Mammary epithelial cell (primary cell): ENCODE measurements at regions of chr2 and their contacts with region 1.

Region 1: GRCh38 chr2:17470855-17471641 is 47.2 kb downstream of the RAD51AP2 start:
- DNase-seq: peak; percentile 66
- H3K4me3 ChIP-seq: peak overlapping the region in 1 of 3 experiments; percentile 0
- H3K27ac ChIP-seq: peak overlapping the region; percentile 53
- H3K4me1 ChIP-seq: peaks cover 22% of the 10 kb centered on the region
- H3K27me3 ChIP-seq: no peaks in the 10 kb centered on the region
- CTCF ChIP-seq: peak; percentile 68 to 74

Region 2: DNA sequence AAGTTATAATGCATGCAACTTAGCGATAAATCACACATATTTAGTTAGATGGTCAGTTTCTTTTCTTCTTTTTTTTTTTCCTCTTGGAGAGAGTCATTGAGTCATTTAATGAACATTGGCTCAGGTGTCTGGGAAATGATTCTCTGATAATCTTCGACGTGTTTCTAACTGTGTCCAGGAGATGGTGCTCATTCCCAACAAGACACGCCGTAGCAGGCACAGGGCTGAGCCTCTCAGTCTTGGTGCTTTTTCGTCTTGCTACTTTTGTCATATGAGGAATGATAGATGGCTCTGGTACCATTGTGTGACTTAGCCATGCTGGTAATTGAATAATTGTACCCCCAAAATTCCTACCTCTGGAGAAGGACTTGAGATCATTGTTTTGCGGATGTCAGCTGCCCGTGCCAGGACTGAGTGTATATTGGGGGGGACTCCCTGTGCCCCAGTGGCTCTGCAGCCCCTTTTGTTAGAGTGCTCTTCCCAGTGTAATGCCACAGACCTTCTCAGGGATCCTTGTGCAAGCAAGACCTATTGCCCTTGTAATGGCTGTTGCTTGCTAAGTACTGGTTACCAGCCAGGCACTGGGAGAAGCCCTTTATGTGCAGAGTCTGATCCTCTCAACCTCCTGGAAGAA is 697.9 kb before region 1 on chr2:
- CTCF ChIA-PET with region 1: no interaction called
- dilution Hi-C with region 1: no loop called
- in situ Hi-C with region 1: no loop called
- intact Hi-C with region 1: loop called (anchors 2 kb)
- DNase-seq: peak; percentile 55
- H3K4me3 ChIP-seq: no peak overlapping the region
- H3K27ac ChIP-seq: no peak overlapping the region
- H3K4me1 ChIP-seq: no peaks in the 10 kb centered on the region
- H3K27me3 ChIP-seq: peaks cover 3% of the 10 kb centered on the region
- CTCF ChIP-seq: peak; percentile 57 to 73

Region 3: DNA sequence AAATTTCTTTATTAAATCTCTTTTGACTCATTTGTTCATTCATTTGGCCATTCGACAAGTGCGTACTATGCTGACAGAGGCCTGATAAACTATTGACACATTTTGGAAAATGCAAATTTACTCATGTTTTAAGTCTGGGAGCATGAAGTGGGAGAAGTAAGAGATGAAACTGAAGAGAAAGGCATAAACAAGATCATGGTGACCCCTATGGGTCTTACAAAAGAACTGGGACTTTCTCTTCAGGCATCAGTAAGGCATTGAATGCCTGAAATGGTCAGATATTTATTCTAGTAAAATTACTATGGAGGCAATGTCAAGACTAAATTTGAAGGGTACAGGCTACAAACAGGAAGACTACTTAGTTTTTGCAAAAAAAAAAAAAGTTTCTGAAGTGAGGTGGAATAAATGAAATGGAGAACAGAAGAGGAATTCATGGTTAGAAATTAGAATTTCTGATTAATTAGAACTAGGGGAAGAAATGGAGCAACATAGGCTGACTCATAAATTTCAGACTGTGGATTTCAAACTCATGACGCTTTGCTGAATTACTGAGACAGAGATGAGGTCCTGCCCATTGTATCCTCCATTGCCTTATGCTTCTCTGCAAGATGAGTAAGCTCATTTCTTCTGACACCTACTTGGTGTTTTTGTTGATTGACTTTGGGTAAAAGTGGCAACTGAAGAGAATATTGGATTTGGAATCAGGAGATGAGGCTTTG is 102.2 kb after region 1 on chr2:
- CTCF ChIA-PET with region 1: no interaction called
- dilution Hi-C with region 1: no loop called
- in situ Hi-C with region 1: no loop called
- intact Hi-C with region 1: loop called (anchors 1 kb)
- DNase-seq: peak; percentile 68
- H3K4me3 ChIP-seq: no peak overlapping the region
- H3K27ac ChIP-seq: peak overlapping the region; percentile 27
- H3K4me1 ChIP-seq: peaks cover 14% of the 10 kb centered on the region
- H3K27me3 ChIP-seq: no peaks in the 10 kb centered on the region
- CTCF ChIP-seq: peak in 1 of 2 donors; percentile 34

Region 4: DNA sequence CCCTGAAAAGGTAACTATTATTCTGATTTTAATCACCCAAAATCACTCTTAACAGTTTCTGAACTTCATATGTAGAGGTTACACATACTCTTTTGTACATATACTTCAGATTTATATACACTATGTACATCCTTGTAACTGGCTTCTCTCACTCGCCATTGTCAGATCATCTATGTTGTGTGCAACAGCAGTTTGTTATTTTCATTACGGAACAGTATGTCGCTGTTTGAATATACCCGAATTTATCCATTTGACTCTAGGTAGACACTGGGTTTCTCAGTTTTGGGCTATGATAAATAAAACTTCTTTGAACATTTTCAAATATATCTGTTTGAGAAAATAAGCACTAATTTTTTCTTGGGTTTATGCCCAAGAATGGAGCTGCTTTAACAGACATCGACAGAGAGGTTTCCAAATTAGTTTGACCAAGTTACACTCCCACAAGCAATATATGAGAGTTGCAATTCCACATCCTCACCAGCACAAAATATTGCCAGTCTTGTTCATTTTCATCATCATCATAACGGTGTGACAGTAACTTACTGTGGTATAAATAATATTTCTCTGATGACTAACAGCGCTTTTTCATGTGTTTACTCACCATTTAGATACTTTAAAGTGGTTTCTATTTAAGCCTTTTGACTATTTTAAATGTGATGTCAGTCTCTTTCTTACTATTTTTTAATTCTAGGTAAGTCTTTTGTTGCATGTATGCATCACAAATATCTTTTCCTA is 201.7 kb after region 1 on chr2:
- CTCF ChIA-PET with region 1: interaction called, 9 read pairs
- dilution Hi-C with region 1: no loop called
- in situ Hi-C with region 1: loop called (anchors 5 kb)
- intact Hi-C with region 1: loop called (anchors 1 kb)
- DNase-seq: peak; percentile 80
- H3K4me3 ChIP-seq: no peak overlapping the region
- H3K27ac ChIP-seq: peak overlapping the region; percentile 60
- H3K4me1 ChIP-seq: no peaks in the 10 kb centered on the region
- H3K27me3 ChIP-seq: no peaks in the 10 kb centered on the region
- CTCF ChIP-seq: peak in 1 of 2 donors; percentile 15

Region 5: GRCh38 chr2:17912266-17912691 is 441.2 kb after region 1 on chr2:
- CTCF ChIA-PET with region 1: no interaction called
- dilution Hi-C with region 1: no loop called
- in situ Hi-C with region 1: no loop called
- intact Hi-C with region 1: loop called (anchors 10 kb)
- DNase-seq: no peak
- H3K4me3 ChIP-seq: no peak overlapping the region
- H3K27ac ChIP-seq: no peak overlapping the region
- H3K4me1 ChIP-seq: no peaks in the 10 kb centered on the region
- H3K27me3 ChIP-seq: no peaks in the 10 kb centered on the region
- CTCF ChIP-seq: no peak